ENCODE measurements at regions of chr17 and their contacts with region 1.

Region 1: GRCh38 chr17:1628856-1629646 is 417 bp upstream of the SLC43A2 start:
- DNase-seq: peak; percentile 97
- ATAC-seq: peak; percentile 94
- H3K4me3 ChIP-seq: peak overlapping the region; percentile 33 to 81
- H3K27ac ChIP-seq: no peak overlapping the region
- H3K4me1 ChIP-seq: no peaks in the 10 kb centered on the region
- H3K27me3 ChIP-seq: no peaks in the 10 kb centered on the region

Region 2: GRCh38 chr17:1573916-1574696 is 54.9 kb before region 1 on chr17:
- intact Hi-C with region 1: loop called (anchors 1 to 2 kb)
- DNase-seq: peak; percentile 91 to 96
- ATAC-seq: peak; percentile 86
- H3K4me3 ChIP-seq: no peak overlapping the region
- H3K27ac ChIP-seq: no peak overlapping the region
- H3K4me1 ChIP-seq: no peaks in the 10 kb centered on the region
- H3K27me3 ChIP-seq: no peaks in the 10 kb centered on the region

Region 3: GRCh38 chr17:1590031-1590748 is 38.9 kb before region 1 on chr17:
- intact Hi-C with region 1: loop called in 1 of 2 experiments (anchors 1 kb)
- DNase-seq: peak; percentile 82 to 90
- ATAC-seq: peak; percentile 84
- H3K4me3 ChIP-seq: no peak overlapping the region
- H3K27ac ChIP-seq: peak overlapping the region in 1 of 2 donors; percentile 77
- H3K4me1 ChIP-seq: no peaks in the 10 kb centered on the region
- H3K27me3 ChIP-seq: no peaks in the 10 kb centered on the region

Region 4: GRCh38 chr17:1684378-1685189 is 55.5 kb after region 1 on chr17 and contains the start of gene PRPF8:
- intact Hi-C with region 1: no loop called
- DNase-seq: peak; percentile 99
- ATAC-seq: peak; percentile 100
- H3K4me3 ChIP-seq: peak within 1 kb of the TSS; percentile 55 to 73
- H3K27ac ChIP-seq: peak within 1 kb of the TSS in 1 of 2 donors; percentile 81
- H3K4me1 ChIP-seq: peaks cover 0 to 4% of the 10 kb centered on the region in 2 donors
- H3K27me3 ChIP-seq: no peaks in the 10 kb centered on the region
- total RNA-seq, gene PRPF8: 183 to 235 TPM

Measured in aorta (tissue), 5 donors.